Activated CD4-positive, alpha-beta memory T cell treated with anti-CD3 and anti-CD28 coated beads, Interleukin-2, amount 10 ng/mL, durations not matched to agents 7 days and 5 days (primary cell): ENCODE measurements at regions of chr19 and their contacts with region 1.

Region 1: DNA sequence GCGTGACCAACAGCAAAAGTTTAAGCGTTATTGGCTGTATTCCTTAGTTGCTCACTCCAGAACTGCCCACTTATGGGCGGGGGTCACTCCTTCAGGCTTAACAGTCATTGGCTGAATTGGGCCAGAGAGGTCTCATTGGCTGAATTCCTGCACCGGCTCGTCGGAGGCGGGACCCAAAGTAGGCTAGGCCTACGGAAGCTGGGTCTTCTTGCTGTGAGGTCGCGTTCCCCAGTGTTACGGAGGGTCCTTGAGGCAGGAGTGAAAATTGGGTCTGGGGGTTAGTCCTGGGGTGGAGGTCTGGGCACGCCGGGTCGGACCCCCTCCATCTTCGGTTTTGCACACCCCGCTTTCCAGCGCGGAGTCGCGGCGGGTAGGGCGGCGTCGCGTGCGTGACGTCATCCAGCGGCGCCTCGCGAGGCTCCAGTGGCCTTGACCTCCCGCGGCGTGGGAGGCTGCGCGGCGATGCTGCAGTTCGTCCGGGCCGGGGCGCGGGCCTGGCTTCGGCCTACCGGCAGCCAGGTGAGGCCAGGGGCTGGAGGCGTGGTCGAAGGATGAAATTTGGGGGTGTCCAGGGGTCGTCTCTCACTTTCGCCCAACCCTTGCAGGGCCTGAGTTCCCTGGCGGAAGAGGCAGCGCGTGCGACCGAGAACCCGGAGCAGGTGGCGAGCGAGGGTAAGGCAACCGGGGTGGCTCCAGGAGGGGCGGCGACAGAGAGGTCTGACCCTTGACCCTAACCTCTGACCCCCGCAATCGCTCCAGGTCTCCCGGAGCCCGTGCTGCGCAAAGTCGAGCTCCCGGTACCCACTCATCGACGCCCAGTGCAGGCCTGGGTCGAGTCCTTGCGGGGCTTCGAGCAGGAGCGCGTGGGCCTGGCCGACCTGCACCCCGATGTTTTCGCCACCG is at the start of gene MRPL4:
- DNase-seq: peak; percentile 97
- H3K4me3 Mint-ChIP-seq: peak within 1 kb of the TSS; percentile 84
- H3K27ac Mint-ChIP-seq: peak within 1 kb of the TSS; percentile 85
- H3K4me1 Mint-ChIP-seq: peaks cover 36% of the 10 kb centered on the region
- H3K27me3 Mint-ChIP-seq: no peaks in the 10 kb centered on the region
- total RNA-seq, gene MRPL4: 55.4 to 58.6 TPM

Region 2: GRCh38 chr19:10142701-10143375 is 109.2 kb before region 1 on chr19:
- CTCF ChIA-PET with region 1: interaction called, 11 read pairs
- POLR2A ChIA-PET with region 1: no interaction called
- DNase-seq: peak; percentile 50
- H3K4me3 Mint-ChIP-seq: peak overlapping the region; percentile 59
- H3K27ac Mint-ChIP-seq: peak overlapping the region; percentile 97
- H3K4me1 Mint-ChIP-seq: peaks cover 37% of the 10 kb centered on the region
- H3K27me3 Mint-ChIP-seq: no peaks in the 10 kb centered on the region

Region 3: GRCh38 chr19:10194500-10195289 is 57.3 kb before region 1 on chr19 and contains the start of gene DNMT1:
- CTCF ChIA-PET with region 1: interaction called, 24 read pairs
- POLR2A ChIA-PET with region 1: interaction called, 13 read pairs
- DNase-seq: peak; percentile 99
- H3K4me3 Mint-ChIP-seq: peak within 1 kb of the TSS; percentile 100
- H3K27ac Mint-ChIP-seq: peak within 1 kb of the TSS; percentile 97
- H3K4me1 Mint-ChIP-seq: peaks cover 60% of the 10 kb centered on the region
- H3K27me3 Mint-ChIP-seq: no peaks in the 10 kb centered on the region
- total RNA-seq, gene DNMT1: 314 to 331 TPM

Region 4: DNA sequence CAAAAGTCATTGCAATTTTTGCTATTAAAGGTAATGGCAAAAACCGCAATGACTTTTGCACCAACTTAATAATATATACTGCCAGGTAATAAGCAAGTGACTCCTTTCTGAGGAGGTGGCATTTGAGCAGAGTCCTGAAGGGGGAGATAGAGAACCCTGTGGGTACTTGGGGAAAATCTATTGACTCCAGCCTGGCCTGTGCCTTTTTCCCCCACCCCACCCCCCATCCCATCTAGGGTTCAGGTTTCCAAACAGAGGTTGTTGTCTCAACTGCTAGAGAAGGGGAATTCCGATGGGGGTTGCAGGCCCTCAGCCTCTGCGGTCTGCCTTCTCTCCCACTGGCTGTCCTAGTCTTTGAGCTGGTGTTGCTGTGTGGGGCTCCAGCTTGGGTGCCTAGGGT is 32.4 kb before region 1 on chr19:
- CTCF ChIA-PET with region 1: interaction called, 12 read pairs
- POLR2A ChIA-PET with region 1: no interaction called
- DNase-seq: peak; percentile 33
- H3K4me3 Mint-ChIP-seq: no peak overlapping the region
- H3K27ac Mint-ChIP-seq: no peak overlapping the region
- H3K4me1 Mint-ChIP-seq: peaks cover 6% of the 10 kb centered on the region
- H3K27me3 Mint-ChIP-seq: no peaks in the 10 kb centered on the region

Region 5: DNA sequence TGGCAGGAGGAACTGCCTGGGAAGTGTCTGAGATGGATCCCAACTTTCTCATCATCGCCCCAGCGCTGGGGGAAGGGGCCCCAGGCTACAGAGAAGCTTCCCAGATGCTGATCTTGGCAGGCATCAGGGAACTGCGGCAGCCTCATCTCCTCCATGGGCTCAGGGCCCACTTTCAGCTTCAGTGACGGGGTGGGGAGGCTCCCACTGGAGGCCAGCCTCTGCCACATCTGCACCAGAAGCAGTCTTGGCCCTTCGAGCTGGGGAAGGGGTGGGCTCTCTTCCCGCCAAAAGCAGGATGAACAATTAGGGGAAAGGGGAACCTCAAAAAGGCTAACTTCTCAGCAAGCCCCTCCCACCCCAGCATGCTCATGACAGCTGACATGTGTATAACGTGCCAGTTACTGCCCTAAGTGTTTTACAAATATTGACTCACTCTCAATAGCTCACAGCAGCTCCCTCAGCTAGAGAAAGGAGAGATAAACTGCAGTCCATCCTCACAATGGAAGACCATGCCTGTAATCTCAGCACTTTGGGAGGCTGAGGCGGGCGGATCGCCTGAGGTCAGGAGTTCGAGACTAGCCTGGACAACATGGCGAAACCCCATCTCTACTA is 13.8 kb before region 1 on chr19:
- CTCF ChIA-PET with region 1: interaction called, 28 read pairs
- POLR2A ChIA-PET with region 1: interaction called, 5 read pairs
- DNase-seq: no peak
- H3K4me3 Mint-ChIP-seq: no peak overlapping the region
- H3K27ac Mint-ChIP-seq: peak overlapping the region; percentile 26
- H3K4me1 Mint-ChIP-seq: peaks cover 29% of the 10 kb centered on the region
- H3K27me3 Mint-ChIP-seq: no peaks in the 10 kb centered on the region